Tibial artery (tissue), 4 donors: ENCODE measurements at regions of chr15 and their contacts with region 1.

Region 1: GRCh38 chr15:26531489-26531888 is 241.4 kb downstream of the GABRB3 start:
- DNase-seq: no peak
- H3K4me3 ChIP-seq: no peak overlapping the region
- H3K27ac ChIP-seq: no peak overlapping the region
- H3K4me1 ChIP-seq: no peaks in the 10 kb centered on the region
- H3K27me3 ChIP-seq: no peaks in the 10 kb centered on the region
- CTCF ChIP-seq: no peak

Region 2: GRCh38 chr15:26453914-26454313 is 77.6 kb before region 1 on chr15:
- intact Hi-C with region 1: loop called (anchors 2 kb)
- DNase-seq: no peak
- H3K4me3 ChIP-seq: no peak overlapping the region
- H3K27ac ChIP-seq: no peak overlapping the region
- H3K4me1 ChIP-seq: no peaks in the 10 kb centered on the region
- H3K27me3 ChIP-seq: no peaks in the 10 kb centered on the region
- CTCF ChIP-seq: no peak